BJ (cell line): ENCODE measurements at regions of chr6 and their contacts with region 1.

Region 1: GRCh38 chr6:33535104-33535603 is 44.9 kb downstream of the BAK1 start:
- DNase-seq: no peak
- H3K4me3 ChIP-seq: no peak overlapping the region
- H3K27me3 ChIP-seq: no peaks in the 10 kb centered on the region
- CTCF ChIP-seq: no peak

Region 2: DNA sequence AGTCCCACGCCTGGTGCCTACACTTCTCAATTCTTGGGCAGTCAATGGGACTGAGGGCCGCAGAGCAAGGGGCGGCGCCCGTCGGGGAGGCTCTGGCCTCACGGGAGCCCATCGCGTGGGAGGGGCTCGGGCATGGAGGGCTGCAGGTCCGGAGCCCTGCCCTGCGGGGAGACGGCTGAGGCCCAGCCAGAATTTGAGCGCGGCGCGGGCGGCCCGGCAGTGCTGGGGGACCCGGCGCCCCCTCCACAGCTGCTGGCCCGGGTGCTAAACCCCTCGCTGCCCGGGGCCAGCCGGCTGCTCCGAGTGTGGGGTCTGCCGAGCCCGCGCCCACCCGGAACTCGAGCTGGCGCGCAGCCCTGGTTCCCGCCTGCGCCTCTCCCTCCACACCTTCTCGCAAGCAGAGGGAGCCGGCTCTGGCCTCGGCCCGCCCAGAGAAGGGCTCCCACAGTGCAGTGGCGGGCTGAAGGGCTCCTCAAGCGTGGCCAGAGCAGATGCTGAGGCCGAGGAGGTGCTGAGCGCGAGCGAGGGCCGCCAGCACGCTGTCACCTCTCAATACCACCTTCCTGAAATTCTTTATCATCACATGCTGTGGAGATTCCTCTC is 13.6 kb before region 1 on chr6:
- CTCF ChIA-PET with region 1: no interaction called
- POLR2A ChIA-PET with region 1: no interaction called
- DNase-seq: no peak
- H3K4me3 ChIP-seq: no peak overlapping the region
- H3K27me3 ChIP-seq: no peaks in the 10 kb centered on the region
- CTCF ChIP-seq: no peak

Region 3: DNA sequence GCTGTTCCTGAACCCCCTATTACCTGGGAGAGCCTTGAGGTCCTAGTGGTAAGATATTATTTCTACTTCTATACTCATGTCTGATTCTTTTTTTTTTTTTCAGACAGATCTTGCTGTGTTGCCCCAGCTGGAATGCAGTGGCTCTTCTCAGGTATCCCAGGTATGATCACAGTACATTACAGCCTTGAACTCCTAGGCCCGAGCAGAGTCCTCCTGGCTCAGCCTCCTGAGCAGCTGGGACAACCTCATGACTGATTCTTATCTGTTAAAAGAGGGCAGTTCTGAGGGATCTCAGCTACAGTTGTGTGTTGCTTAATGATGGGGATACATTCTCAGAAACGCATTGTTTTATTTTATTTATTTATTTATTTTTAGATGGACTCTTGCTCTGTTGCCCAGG is 14.8 kb after region 1 on chr6:
- CTCF ChIA-PET with region 1: interaction called, 5 read pairs
- POLR2A ChIA-PET with region 1: interaction called, 24 read pairs
- DNase-seq: no peak
- H3K4me3 ChIP-seq: no peak overlapping the region
- H3K27me3 ChIP-seq: no peaks in the 10 kb centered on the region; the same call in 1 of the 2 replicates
- CTCF ChIP-seq: no peak